ENCODE measurements at regions of chr15 and their contacts with region 1.

Region 1: DNA sequence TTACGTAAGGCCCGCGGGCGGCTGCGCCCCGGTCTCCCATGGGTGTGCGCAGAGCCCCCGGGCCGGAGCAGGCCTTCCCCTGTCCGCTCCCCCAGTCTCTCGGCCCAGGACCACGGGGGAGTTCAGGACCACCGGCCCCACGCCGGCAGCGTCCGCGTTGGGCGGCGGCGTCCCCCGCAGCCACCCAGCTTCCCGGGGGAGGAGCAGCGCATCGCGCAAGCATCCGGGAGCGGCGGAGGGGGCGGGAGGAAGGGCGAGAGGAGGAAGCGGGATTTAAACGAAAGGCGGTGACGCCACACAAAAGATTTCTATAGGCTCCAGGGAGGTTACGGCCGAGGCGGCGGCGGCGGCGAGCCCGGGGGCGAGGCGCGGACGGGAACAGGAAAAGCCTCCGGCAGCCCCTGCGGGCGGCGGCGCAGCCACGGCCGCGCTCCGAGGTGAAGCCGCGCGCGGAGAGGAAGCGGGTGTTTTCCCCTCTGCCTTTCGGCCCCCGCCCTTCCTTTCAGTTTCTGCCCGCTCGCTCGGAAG is at the start of gene TLNRD1:
- DNase-seq: peak; percentile 88
- ATAC-seq: peak; percentile 75
- H3K4me3 Mint-ChIP-seq: peak within 1 kb of the TSS; percentile 99
- H3K27ac Mint-ChIP-seq: peak within 1 kb of the TSS; percentile 97
- H3K4me1 Mint-ChIP-seq: peaks cover 47% of the 10 kb centered on the region
- H3K27me3 Mint-ChIP-seq: no peaks in the 10 kb centered on the region
- total RNA-seq, gene TLNRD1: 24.0 to 24.5 TPM

Region 2: DNA sequence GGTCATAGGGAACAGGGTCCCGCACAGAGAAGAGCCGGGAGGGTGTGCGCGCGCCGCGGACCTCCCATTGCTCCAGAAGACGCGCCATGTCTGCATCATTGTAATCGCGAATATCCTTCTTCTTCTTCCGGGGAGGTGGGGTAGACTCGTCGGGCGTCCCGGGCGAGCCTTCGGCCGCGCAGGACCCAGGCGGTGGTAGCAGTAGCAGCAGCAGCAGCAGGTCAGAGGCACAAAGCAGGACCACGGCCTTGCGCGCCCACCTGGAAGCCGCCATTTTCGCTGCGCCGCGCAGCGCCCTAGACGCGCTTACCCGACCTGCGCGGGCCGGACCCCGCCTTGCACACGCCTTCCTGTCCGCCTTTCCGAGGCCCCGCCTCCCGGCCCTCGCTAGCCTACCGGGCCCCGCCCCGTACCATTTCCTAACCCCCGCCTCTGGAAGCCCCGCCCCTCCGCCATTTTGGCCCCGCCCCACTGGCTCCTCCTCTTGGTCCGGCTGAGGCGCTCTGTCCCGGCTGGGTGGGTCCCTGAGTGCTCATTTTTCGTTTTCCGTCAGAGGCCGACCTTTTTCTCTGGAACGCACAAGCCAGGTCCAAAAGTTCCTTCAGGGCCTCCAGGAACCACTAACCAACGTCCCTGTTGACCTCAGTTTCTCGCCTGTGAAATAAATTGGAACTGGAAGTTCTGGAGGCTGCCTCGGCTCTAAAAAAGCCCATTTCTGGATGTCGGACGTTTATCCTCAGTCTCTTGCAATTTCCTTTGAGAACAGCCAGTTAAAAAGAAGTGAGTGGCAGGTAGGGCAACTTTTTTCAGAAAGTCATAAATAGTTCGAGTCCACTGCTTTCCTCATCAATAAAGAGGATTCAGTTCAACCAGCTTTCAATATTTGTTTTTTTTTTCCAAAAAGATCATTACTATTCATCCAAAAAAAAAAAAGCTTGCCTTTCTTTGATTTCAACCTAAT is 10.9 kb before region 1 on chr15 and contains the start of gene MESD:
- POLR2A ChIA-PET with region 1: interaction called, 33 read pairs
- DNase-seq: peak; percentile 97
- ATAC-seq: peak; percentile 99
- H3K4me3 Mint-ChIP-seq: peak within 1 kb of the TSS; percentile 98
- H3K27ac Mint-ChIP-seq: peak within 1 kb of the TSS; percentile 97
- H3K4me1 Mint-ChIP-seq: peaks cover 42% of the 10 kb centered on the region
- H3K27me3 Mint-ChIP-seq: no peaks in the 10 kb centered on the region
- total RNA-seq, gene MESD: 28.0 to 28.4 TPM

Measured in activated naive CD8-positive, alpha-beta T cell treated with anti-CD3 and anti-CD28 coated beads, Interleukin-2, amount 10 ng/mL, durations not matched to agents 7 days and 5 days (primary cell).